HepG2 (cell line): ENCODE measurements at regions of chr1 and their contacts with region 1.

Region 1: DNA sequence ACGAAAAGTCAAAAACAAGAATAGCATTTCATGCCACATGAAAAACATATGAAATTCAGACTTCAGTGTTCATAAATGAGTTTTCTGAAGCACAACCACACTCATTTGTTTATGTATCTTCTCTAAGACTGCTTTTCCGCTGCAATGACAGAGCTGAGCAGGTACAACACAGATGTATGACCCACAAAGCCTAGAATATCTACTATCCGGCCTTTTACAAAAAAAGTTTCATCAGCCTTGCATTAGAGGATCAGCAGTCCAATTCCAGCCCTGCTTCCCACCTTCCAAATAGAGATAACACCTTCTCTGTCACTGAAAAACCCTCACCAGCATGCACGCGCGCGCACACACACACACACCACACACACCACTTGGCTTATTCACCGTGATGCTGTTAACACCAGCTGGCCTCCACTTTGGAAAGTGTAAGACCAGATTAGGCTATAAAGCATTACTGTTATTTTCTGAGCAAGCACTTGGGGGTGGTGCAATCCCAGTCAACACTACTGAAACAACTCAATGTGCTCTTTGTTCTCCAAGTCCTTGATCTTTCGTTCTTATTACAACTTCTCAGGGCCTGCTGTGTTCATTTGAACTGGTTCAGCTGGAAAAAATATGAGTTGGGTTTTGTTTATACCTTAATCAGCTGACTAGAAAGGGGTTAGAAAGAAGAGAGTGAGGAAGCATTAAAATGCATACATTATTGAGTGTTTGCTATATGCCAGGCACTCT is 90.0 kb downstream of the GLUL start:
- DNase-seq: peak; percentile 99
- ATAC-seq: peak; percentile 94
- H3K4me3 ChIP-seq: peak overlapping the region in 2 of 3 experiments; percentile 27 to 38; a peak in 2 of 6 replicates
- H3K27ac ChIP-seq: peak overlapping the region; percentile 97
- H3K4me1 ChIP-seq: peaks cover 83% of the 10 kb centered on the region
- H3K27me3 ChIP-seq: no peaks in the 10 kb centered on the region
- CTCF ChIP-seq: peak; percentile 79
- EP300 ChIP-seq: peak; percentile 95 to 97
- POLR2A ChIP-seq: peak; percentile 25 to 37; a peak in 2 of 4 replicates
- RAD21 ChIP-seq: peak; percentile 68

Region 2: DNA sequence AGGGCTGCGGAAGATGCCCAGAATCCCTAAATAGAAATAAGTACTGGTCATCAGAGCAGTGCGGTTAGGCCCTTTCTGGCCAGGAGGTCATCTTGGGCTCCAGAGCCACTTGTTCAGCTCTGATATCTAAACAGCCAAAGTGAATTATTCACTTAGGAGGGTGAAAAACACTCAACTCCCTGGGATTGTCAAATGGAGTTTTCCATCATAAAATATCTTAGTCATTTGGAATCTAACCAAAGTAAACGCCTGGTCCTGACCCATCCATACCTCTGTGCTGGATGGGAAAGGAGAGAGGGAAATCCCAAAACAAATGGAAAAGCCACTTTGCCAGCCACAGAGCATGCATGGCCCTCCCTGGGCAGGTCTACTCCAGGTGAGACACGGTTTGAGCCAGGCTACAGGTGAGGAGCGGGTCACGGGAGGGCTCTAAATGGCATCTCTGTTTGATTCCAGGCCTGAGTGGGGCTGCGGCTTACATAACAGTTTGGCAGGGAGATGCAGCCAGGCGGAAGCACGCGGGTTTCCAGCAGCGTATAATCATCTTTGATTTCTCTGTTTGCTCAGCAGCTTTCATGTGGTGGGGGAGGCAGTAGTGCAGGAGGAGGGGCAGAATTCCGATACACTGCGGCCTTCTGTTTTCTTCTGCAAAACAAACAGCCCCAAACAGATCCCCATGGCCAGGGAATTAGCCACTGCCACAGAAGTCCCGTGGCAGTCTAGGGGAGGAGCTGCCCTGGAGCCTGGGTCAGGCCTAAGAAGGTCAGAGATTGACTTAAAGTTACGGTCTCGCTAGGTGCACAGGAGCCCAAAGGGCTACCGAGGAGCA is 181.0 kb before region 1 on chr1:
- CTCF ChIA-PET with region 1: no interaction called
- POLR2A ChIA-PET with region 1: no interaction called
- in situ Hi-C with region 1: no loop called
- intact Hi-C with region 1: loop called (anchors 2 kb)
- DNase-seq: peak; percentile 91
- ATAC-seq: peak; percentile 90
- H3K4me3 ChIP-seq: peak overlapping the region in 2 of 3 experiments; percentile 31 to 53; a peak in 3 of 6 replicates
- H3K27ac ChIP-seq: peak overlapping the region; percentile 40
- H3K4me1 ChIP-seq: peaks cover 52% of the 10 kb centered on the region
- H3K27me3 ChIP-seq: no peaks in the 10 kb centered on the region
- CTCF ChIP-seq: no peak
- EP300 ChIP-seq: peak; percentile 70 to 92; a peak in 3 of 4 replicates
- POLR2A ChIP-seq: no peak
- RAD21 ChIP-seq: no peak

Region 3: DNA sequence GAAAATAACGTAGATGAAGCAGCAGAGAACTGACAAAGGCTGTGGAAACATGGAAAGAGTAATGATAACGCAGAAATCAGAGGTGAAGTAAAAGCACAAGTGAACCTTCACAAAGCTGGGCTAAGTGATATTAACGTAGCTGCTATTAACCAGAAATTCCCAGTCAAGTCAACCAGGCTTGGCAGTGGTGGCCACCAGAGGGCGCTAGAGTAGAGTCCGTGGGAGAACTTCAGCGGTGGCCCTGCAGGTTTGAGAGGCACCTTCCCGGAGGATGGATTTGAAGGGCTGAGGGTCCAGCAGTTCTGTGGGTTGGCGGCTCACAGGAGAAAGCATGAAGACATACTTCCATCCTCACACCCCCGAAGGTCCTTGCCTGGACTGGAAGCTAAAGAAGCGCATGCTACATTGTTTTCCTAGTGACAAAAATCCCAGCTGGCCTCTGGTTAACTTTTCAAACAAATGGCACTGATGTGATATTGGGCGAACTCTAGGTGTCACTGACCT is 158.4 kb before region 1 on chr1:
- CTCF ChIA-PET with region 1: no interaction called
- POLR2A ChIA-PET with region 1: interaction called, 8 read pairs
- in situ Hi-C with region 1: no loop called
- intact Hi-C with region 1: loop called (anchors 5 kb)
- DNase-seq: peak; percentile 71
- ATAC-seq: peak; percentile 90
- H3K4me3 ChIP-seq: peak overlapping the region in 1 of 3 experiments; percentile 30; a peak in 2 of 6 replicates
- H3K27ac ChIP-seq: no peak overlapping the region
- H3K4me1 ChIP-seq: peaks cover 51% of the 10 kb centered on the region
- H3K27me3 ChIP-seq: no peaks in the 10 kb centered on the region
- CTCF ChIP-seq: peak; percentile 95
- EP300 ChIP-seq: no peak
- POLR2A ChIP-seq: no peak
- RAD21 ChIP-seq: peak; percentile 92

Region 4: GRCh38 chr1:182200025-182200812 is 101.4 kb before region 1 on chr1:
- CTCF ChIA-PET with region 1: no interaction called
- POLR2A ChIA-PET with region 1: interaction called, 3 read pairs
- in situ Hi-C with region 1: no loop called
- intact Hi-C with region 1: loop called (anchors 5 kb)
- DNase-seq: no peak
- ATAC-seq: peak; percentile 75
- H3K4me3 ChIP-seq: no peak overlapping the region
- H3K27ac ChIP-seq: peak overlapping the region; percentile 46
- H3K4me1 ChIP-seq: peaks cover 55% of the 10 kb centered on the region
- H3K27me3 ChIP-seq: peaks cover 0 to 1% of the 10 kb centered on the region in 2 experiments; a peak in 1 of 5 replicates
- CTCF ChIP-seq: no peak
- EP300 ChIP-seq: peak in 1 of 2 experiments; percentile 78; a peak in 2 of 4 replicates
- POLR2A ChIP-seq: no peak
- RAD21 ChIP-seq: no peak

Region 5: DNA sequence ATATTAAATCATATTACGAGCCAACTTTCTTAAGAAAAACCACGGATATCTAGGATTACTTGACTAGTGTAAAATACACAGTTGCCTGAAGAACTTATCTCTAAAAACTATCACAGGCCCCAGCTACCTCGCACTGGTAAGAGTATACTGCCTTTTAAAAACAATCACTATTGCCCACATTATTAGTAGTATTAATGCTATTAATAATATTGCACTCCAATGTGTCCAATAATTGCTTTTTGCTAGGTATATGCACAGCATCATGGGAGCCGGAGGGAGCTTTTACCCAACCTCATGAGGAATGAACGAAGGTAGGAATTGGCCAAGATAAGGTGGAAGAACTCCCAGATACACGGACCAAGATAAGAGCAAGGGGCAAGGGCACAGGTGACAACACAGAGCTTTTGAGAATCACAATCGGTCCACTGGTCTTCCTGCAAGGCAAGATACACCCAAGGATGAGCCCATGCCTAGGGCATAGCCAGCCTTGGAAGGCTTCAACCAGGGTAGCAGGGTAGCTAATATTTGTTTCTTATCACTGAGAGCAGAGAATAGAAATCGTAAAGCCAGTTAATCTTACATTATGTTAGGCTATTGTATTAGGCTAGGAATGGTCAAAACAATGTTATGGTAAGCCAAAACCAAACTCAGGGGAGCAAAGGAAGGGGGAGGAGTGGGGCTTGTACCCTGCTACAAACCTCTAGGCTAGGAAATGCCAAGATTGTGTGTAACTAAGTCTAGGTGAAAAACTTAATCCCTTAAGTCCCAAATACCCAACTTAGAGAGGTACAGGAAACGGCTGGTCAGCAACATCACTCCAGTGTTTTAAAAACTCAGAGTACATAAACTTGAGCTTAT is 80.6 kb after region 1 on chr1:
- CTCF ChIA-PET with region 1: no interaction called
- POLR2A ChIA-PET with region 1: interaction called, 10 read pairs
- in situ Hi-C with region 1: no loop called
- intact Hi-C with region 1: no loop called
- DNase-seq: no peak
- ATAC-seq: peak; percentile 5; the same call in 1 of the 3 replicates
- H3K4me3 ChIP-seq: no peak overlapping the region
- H3K27ac ChIP-seq: no peak overlapping the region
- H3K4me1 ChIP-seq: peaks cover 51% of the 10 kb centered on the region
- H3K27me3 ChIP-seq: no peaks in the 10 kb centered on the region
- CTCF ChIP-seq: no peak
- EP300 ChIP-seq: no peak
- POLR2A ChIP-seq: peak; percentile 27 to 51; a peak in 2 of 4 replicates
- RAD21 ChIP-seq: no peak

Region 6: GRCh38 chr1:182391362-182392044 is 89.9 kb after region 1 on chr1 and contains the start of gene GLUL:
- CTCF ChIA-PET with region 1: no interaction called
- POLR2A ChIA-PET with region 1: interaction called, 51 read pairs
- in situ Hi-C with region 1: loop called (anchors 5 kb)
- intact Hi-C with region 1: loop called (anchors 1 kb)
- DNase-seq: peak; percentile 86
- ATAC-seq: peak; percentile 94
- H3K4me3 ChIP-seq: peak within 1 kb of the TSS; percentile 94 to 98 (median 97)
- H3K27ac ChIP-seq: peak within 1 kb of the TSS; percentile 94
- H3K4me1 ChIP-seq: peaks cover 56% of the 10 kb centered on the region
- H3K27me3 ChIP-seq: no peaks in the 10 kb centered on the region; a peak in 1 of 5 replicates
- CTCF ChIP-seq: 0 out of 2 replicates have a peak, but pooled peaks have one; percentile 1
- EP300 ChIP-seq: no peak; a peak in 2 of 4 replicates
- POLR2A ChIP-seq: peak; percentile 99 to 100
- RAD21 ChIP-seq: peak; percentile 66
- total RNA-seq, gene GLUL: 827 and 909 TPM in 2 replicates

Region 7: DNA sequence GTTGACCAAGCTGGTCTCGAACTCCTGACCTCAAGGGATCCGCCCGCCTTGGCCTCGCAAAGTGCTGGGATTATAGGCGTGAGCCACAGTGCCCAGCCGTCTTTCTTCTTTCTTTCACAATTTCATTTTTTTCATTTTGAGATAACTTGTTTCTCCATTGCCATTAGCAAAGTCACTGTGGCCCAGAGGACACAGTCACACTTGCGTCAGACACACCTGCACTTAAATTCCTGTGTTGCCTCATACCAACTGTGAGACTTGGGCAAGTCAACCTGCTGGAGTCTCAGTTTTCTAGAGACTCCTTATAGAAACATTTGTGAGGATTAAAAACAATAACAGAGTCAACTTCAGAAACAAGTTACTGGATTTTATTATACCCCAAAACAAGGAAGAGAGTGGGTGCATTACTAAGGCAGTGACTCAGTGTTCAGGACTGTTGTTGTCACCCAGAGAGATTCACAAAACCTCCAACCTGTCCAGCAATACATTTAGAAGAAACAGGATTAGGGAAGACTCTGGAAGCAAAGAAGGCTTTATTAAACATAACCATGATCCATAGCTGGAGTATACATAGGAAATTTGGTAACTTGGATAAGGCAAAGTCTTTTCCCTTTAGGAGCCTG is 96.2 kb after region 1 on chr1:
- CTCF ChIA-PET with region 1: no interaction called
- POLR2A ChIA-PET with region 1: interaction called, 51 read pairs
- in situ Hi-C with region 1: loop called (anchors 5 kb)
- intact Hi-C with region 1: loop called (anchors 1 kb)
- DNase-seq: no peak
- ATAC-seq: no peak
- H3K4me3 ChIP-seq: no peak overlapping the region
- H3K27ac ChIP-seq: no peak overlapping the region
- H3K4me1 ChIP-seq: peaks cover 38% of the 10 kb centered on the region
- H3K27me3 ChIP-seq: no peaks in the 10 kb centered on the region
- CTCF ChIP-seq: no peak
- EP300 ChIP-seq: no peak
- POLR2A ChIP-seq: no peak
- RAD21 ChIP-seq: no peak

Region 8: GRCh38 chr1:182731852-182732545 is 430.4 kb after region 1 on chr1:
- CTCF ChIA-PET with region 1: no interaction called
- POLR2A ChIA-PET with region 1: no interaction called
- in situ Hi-C with region 1: no loop called
- intact Hi-C with region 1: no loop called
- DNase-seq: no peak
- ATAC-seq: no peak
- H3K4me3 ChIP-seq: no peak overlapping the region
- H3K27ac ChIP-seq: no peak overlapping the region
- H3K4me1 ChIP-seq: no peaks in the 10 kb centered on the region
- H3K27me3 ChIP-seq: peaks cover 0 to 8% of the 10 kb centered on the region in 2 experiments; a peak in 3 of 5 replicates
- CTCF ChIP-seq: no peak
- EP300 ChIP-seq: no peak
- POLR2A ChIP-seq: no peak
- RAD21 ChIP-seq: no peak